ENCODE measurements at regions of chr1 and their contacts with region 1.

Region 1: GRCh38 chr1:108125312-108126138 is 74.6 kb downstream of the SLC25A24 start:
- DNase-seq: peak; percentile 69
- H3K4me3 ChIP-seq: no peak overlapping the region
- H3K27ac ChIP-seq: no peak overlapping the region
- H3K27me3 ChIP-seq: peaks cover 3% of the 10 kb centered on the region
- CTCF ChIP-seq: peak; percentile 97

Region 2: GRCh38 chr1:108107658-108108518 is 17.6 kb before region 1 on chr1:
- CTCF ChIA-PET with region 1: interaction called, 13 read pairs
- POLR2A ChIA-PET with region 1: no interaction called
- DNase-seq: no peak
- H3K4me3 ChIP-seq: no peak overlapping the region
- H3K27ac ChIP-seq: no peak overlapping the region
- H3K27me3 ChIP-seq: no peaks in the 10 kb centered on the region
- CTCF ChIP-seq: no peak

Region 3: DNA sequence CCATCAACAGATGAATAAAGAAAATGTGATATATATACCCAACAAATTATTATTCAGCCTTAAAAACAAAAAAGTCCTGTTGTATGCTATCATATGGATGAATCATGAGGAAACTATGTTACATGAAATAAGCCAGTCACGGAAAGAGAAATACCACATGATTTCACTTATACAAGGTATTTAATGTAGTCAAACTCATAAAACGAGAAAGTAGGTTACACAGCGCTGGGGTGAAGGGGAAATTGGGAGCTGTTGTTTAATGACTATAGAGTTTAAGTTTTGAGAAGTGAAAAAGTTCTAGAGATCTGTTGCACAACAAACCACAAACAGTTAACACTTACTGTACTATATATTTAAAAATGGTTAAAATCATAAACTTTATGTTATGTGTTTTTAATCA is 16.1 kb after region 1 on chr1:
- CTCF ChIA-PET with region 1: interaction called, 26 read pairs
- POLR2A ChIA-PET with region 1: no interaction called
- DNase-seq: no peak
- H3K4me3 ChIP-seq: no peak overlapping the region
- H3K27ac ChIP-seq: no peak overlapping the region
- H3K27me3 ChIP-seq: no peaks in the 10 kb centered on the region
- CTCF ChIP-seq: no peak

Region 4: GRCh38 chr1:108152782-108153222 is 27.3 kb after region 1 on chr1:
- CTCF ChIA-PET with region 1: interaction called, 13 read pairs
- POLR2A ChIA-PET with region 1: no interaction called
- DNase-seq: no peak
- H3K4me3 ChIP-seq: no peak overlapping the region
- H3K27ac ChIP-seq: no peak overlapping the region
- H3K27me3 ChIP-seq: no peaks in the 10 kb centered on the region
- CTCF ChIP-seq: no peak

Measured in AG04450 (cell line).